ENCODE measurements at regions of chr7 and their contacts with region 1.

Region 1: DNA sequence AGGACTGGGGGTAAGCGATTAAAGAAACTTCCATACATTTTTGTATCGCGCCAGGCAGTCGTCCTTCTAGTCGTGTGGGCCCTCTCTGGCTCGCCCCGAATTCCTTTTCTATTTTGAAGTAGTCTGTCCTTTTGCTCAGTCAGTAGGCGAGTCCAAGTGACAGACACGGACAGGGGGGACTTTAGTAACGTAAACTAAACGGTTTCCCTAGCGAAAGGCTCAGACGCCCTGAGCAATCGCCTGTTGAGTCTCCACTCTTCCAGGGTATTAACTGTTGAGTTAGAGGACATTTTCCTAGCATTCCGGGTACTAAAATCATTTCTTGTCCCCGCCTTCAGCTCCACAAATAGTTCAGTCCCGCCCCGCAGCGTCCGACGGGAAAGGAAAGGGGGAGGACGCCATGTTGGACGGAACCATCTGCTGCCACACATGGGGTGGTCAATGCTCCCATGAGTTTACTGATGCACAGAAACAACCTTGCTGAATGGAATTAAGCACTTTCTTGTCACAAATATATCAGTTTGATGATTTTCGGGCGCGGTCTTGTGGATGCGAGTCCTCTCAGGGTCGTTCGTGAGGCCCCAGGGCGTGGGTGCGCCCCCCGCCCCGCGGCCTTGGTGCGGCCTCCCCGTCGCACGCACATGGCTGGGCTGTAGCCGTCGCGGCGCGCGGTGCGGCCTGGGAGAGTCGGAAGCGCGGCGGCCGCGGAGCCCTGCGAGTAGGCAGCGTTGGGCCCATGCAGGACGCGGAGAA is at the start of gene EIF3B:
- DNase-seq: peak; percentile 59
- H3K4me3 ChIP-seq: peak within 1 kb of the TSS; percentile 78 to 99 (median 96)
- H3K27ac ChIP-seq: peak within 1 kb of the TSS; percentile 95 to 99 (median 98)
- H3K4me1 ChIP-seq: peaks cover 33 to 55% (median 36%) of the 10 kb centered on the region in 3 donors
- H3K27me3 ChIP-seq: no peaks in the 10 kb centered on the region
- CTCF ChIP-seq: peak in 2 of 6 experiments; percentile 7 to 8
- POLR2A ChIP-seq: peak in 2 of 4 donors; percentile 45 to 63
- total RNA-seq, gene EIF3B: 127 to 155 (median 136) TPM

Region 2: GRCh38 chr7:2241580-2242540 is 112.5 kb before region 1 on chr7 and contains the starts of genes MRM2 and NUDT1:
- intact Hi-C with region 1: loop called (anchors 10 kb)
- DNase-seq: no peak
- H3K4me3 ChIP-seq: peak within 1 kb of the TSS; percentile 60 to 100 (median 96)
- H3K27ac ChIP-seq: peak within 1 kb of the TSS; percentile 63 to 91 (median 83)
- H3K4me1 ChIP-seq: peaks cover 7 to 45% (median 19%) of the 10 kb centered on the region in 3 donors
- H3K27me3 ChIP-seq: no peaks in the 10 kb centered on the region
- CTCF ChIP-seq: no peak
- POLR2A ChIP-seq: peak in 2 of 4 donors; percentile 51 to 66
- total RNA-seq, gene MRM2: 16.8 to 31.5 (median 17.9) TPM
- total RNA-seq, gene NUDT1: 16.3 to 51.7 (median 28.2) TPM

Measured in esophagus squamous epithelium (tissue), 5 donors.